ENCODE measurements at regions of chr14 and their contacts with region 1.

Region 1: DNA sequence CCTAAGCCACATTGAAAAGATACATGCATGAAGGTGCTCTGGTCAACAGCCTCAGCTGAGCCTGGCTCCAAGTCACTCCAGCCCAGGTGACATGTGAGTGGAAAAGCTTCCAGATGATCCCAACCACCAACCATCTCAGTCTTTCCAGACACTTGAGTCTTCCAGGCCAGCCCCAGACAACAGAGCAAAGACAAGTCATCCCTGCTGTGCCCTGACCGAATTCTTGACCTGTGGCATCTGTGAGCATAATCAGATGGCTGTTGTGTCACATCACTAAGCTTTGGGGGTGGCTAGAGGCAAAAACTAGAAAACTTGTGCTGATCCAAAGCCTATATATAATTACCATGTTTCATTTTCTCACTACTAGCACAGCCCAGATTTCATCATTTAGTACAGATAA is 50.8 kb upstream of the ISM2 start:
- DNase-seq: no peak

Region 2: DNA sequence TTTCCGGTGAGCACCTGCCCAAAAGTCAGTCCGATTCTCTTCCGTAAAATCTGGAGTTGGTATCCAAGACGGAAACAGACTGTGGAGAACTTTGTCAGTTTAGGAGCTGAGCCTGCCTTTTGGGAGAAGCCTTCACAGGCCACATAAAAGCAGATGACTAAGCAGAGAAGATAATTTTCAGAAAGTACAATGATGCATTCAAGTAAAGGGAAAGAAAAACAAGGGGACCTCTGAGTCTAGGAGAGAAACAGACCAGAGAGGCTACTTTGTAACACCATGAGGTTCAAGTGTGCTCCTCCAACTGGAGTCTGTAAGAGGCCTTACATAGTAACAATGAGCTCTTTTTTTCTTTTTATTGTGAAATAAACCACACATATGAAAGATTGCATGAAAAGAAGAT is 193.6 kb before region 1 on chr14:
- CTCF ChIA-PET with region 1: no interaction called
- POLR2A ChIA-PET with region 1: no interaction called
- DNase-seq: no peak

Region 3: GRCh38 chr14:77457522-77458290 is 91.7 kb before region 1 on chr14 and contains the starts of genes AHSA1 and VIPAS39:
- CTCF ChIA-PET with region 1: interaction called, 16 read pairs
- POLR2A ChIA-PET with region 1: interaction called, 3 read pairs
- DNase-seq: peak; percentile 92

Region 4: GRCh38 chr14:77681196-77682157 is 132.0 kb after region 1 on chr14:
- CTCF ChIA-PET with region 1: no interaction called
- POLR2A ChIA-PET with region 1: no interaction called
- DNase-seq: no peak

Measured in HEK293T (cell line).